HEK293 (cell line): ENCODE measurements at regions of chr17 and their contacts with region 1.

Region 1: DNA sequence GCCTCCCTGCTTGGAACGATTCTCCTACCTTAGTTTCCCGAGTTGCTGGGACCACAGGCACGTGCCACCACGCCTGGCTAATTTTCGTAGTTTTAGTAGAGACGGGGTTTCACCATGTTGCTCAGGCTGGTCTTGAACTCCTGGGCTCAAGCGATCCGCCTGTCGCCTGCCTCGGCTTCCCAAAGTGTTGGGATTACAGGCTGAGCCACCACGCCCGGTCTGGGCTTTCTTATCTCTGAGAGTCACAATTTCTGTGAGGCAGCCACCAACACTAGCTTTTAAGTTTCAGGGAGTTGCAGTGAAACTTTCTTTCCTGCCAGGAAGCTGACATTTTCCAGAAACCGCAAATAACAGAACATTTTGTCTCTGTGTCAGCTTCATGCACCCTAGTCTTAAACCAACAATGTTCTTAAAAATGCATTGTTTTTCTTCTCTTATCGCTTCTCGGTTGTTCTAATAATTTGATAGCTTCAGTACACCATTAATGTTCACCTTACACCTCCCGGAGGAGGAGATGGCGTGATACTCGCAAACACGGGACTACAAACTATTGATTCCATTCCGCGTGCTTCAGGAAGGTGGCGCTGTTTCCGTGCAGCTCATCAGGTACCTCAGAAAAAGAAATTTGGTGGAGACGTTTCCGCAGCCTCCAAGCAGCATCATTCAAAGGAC is 7.4 kb upstream of the DHRS7B start:
- H3K4me3 ChIP-seq: no peak overlapping the region
- H3K27ac ChIP-seq: no peak overlapping the region
- H3K4me1 ChIP-seq: no peaks in the 10 kb centered on the region
- CTCF ChIP-seq: peak; percentile 76; the same call in 1 of the 2 replicates

Region 2: GRCh38 chr17:20966870-20967269 is 152.5 kb before region 1 on chr17:
- CTCF ChIA-PET with region 1: no interaction called
- POLR2A ChIA-PET with region 1: no interaction called
- H3K4me3 ChIP-seq: no peak overlapping the region
- H3K27ac ChIP-seq: no peak overlapping the region
- H3K4me1 ChIP-seq: no peaks in the 10 kb centered on the region
- CTCF ChIP-seq: no peak

Region 3: GRCh38 chr17:21098934-21099689 is 20.3 kb before region 1 on chr17:
- CTCF ChIA-PET with region 1: interaction called, 16 read pairs
- POLR2A ChIA-PET with region 1: interaction called, 10 read pairs
- H3K4me3 ChIP-seq: peak overlapping the region; percentile 62
- H3K27ac ChIP-seq: peak overlapping the region; percentile 93
- H3K4me1 ChIP-seq: no peaks in the 10 kb centered on the region
- CTCF ChIP-seq: no peak

Region 4: GRCh38 chr17:21105064-21105894 is 14.1 kb before region 1 on chr17:
- CTCF ChIA-PET with region 1: interaction called, 34 read pairs
- POLR2A ChIA-PET with region 1: interaction called, 10 read pairs
- H3K4me3 ChIP-seq: no peak overlapping the region
- H3K27ac ChIP-seq: no peak overlapping the region
- H3K4me1 ChIP-seq: no peaks in the 10 kb centered on the region
- CTCF ChIP-seq: no peak

Region 5: GRCh38 chr17:21149621-21150020 is 30.2 kb after region 1 on chr17:
- CTCF ChIA-PET with region 1: no interaction called
- POLR2A ChIA-PET with region 1: no interaction called
- H3K4me3 ChIP-seq: no peak overlapping the region
- H3K27ac ChIP-seq: no peak overlapping the region
- H3K4me1 ChIP-seq: no peaks in the 10 kb centered on the region
- CTCF ChIP-seq: no peak